ENCODE measurements at regions of chr6 and their contacts with region 1.

Region 1: GRCh38 chr6:1893470-1894130 is 283.9 kb downstream of the FOXC1 start:
- DNase-seq: no peak
- ATAC-seq: no peak
- H3K4me3 ChIP-seq: no peak overlapping the region
- H3K4me3 Mint-ChIP-seq: no peak overlapping the region
- H3K27ac ChIP-seq: no peak overlapping the region
- H3K27ac Mint-ChIP-seq: no peak overlapping the region
- H3K4me1 ChIP-seq: no peaks in the 10 kb centered on the region
- H3K4me1 Mint-ChIP-seq: peaks cover 0 to 4% (median 0%) of the 10 kb centered on the region in 7 donors
- H3K27me3 ChIP-seq: no peaks in the 10 kb centered on the region
- H3K27me3 Mint-ChIP-seq: no peaks in the 10 kb centered on the region

Region 2: GRCh38 chr6:1396952-1397868 is 496.4 kb before region 1 on chr6:
- CTCF ChIA-PET with region 1: no interaction called
- POLR2A ChIA-PET with region 1: no interaction called
- intact Hi-C with region 1: no loop called
- DNase-seq: peak; percentile 39 to 75 (median 67)
- ATAC-seq: peak; percentile 78
- H3K4me3 ChIP-seq: no peak overlapping the region
- H3K4me3 Mint-ChIP-seq: peak overlapping the region in 5 of 10 donors; percentile 4 to 57 (median 41)
- H3K27ac ChIP-seq: no peak overlapping the region
- H3K27ac Mint-ChIP-seq: peak overlapping the region in 1 of 9 donors; percentile 24
- H3K4me1 ChIP-seq: no peaks in the 10 kb centered on the region
- H3K4me1 Mint-ChIP-seq: peaks cover 0 to 16% (median 6%) of the 10 kb centered on the region in 7 donors
- H3K27me3 ChIP-seq: peaks cover 0 to 17% of the 10 kb centered on the region in 2 donors
- H3K27me3 Mint-ChIP-seq: peaks cover 54 to 67% (median 59%) of the 10 kb centered on the region in 5 donors

Region 3: GRCh38 chr6:1915226-1915625 is 21.6 kb after region 1 on chr6:
- CTCF ChIA-PET with region 1: no interaction called
- POLR2A ChIA-PET with region 1: no interaction called
- intact Hi-C with region 1: loop called in 1 of 2 experiments (anchors 2 kb)
- DNase-seq: no peak
- ATAC-seq: no peak
- H3K4me3 ChIP-seq: no peak overlapping the region
- H3K4me3 Mint-ChIP-seq: no peak overlapping the region
- H3K27ac ChIP-seq: no peak overlapping the region
- H3K27ac Mint-ChIP-seq: no peak overlapping the region
- H3K4me1 ChIP-seq: no peaks in the 10 kb centered on the region
- H3K4me1 Mint-ChIP-seq: peaks cover 0 to 20% (median 6%) of the 10 kb centered on the region in 7 donors
- H3K27me3 ChIP-seq: no peaks in the 10 kb centered on the region
- H3K27me3 Mint-ChIP-seq: no peaks in the 10 kb centered on the region

Region 4: GRCh38 chr6:1995651-1996103 is 102.1 kb after region 1 on chr6:
- CTCF ChIA-PET with region 1: no interaction called
- POLR2A ChIA-PET with region 1: no interaction called
- intact Hi-C with region 1: no loop called
- DNase-seq: no peak
- ATAC-seq: no peak
- H3K4me3 ChIP-seq: no peak overlapping the region
- H3K4me3 Mint-ChIP-seq: no peak overlapping the region
- H3K27ac ChIP-seq: no peak overlapping the region
- H3K27ac Mint-ChIP-seq: no peak overlapping the region
- H3K4me1 ChIP-seq: no peaks in the 10 kb centered on the region
- H3K4me1 Mint-ChIP-seq: peaks cover 0 to 9% (median 0%) of the 10 kb centered on the region in 7 donors
- H3K27me3 ChIP-seq: no peaks in the 10 kb centered on the region
- H3K27me3 Mint-ChIP-seq: no peaks in the 10 kb centered on the region

Measured in naive thymus-derived CD4-positive, alpha-beta T cell (primary cell).